WTC11 (cell line): ENCODE measurements at regions of chr7 and their contacts with region 1.

Region 1: GRCh38 chr7:129218514-129219062 is 6.2 kb upstream of the AHCYL2 start:
- DNase-seq: peak; percentile 91
- ATAC-seq: peak; percentile 80
- H3K4me3 Mint-ChIP-seq: no peak overlapping the region
- H3K27ac Mint-ChIP-seq: no peak overlapping the region
- H3K4me1 Mint-ChIP-seq: 0 out of 2 replicates have a peak, but pooled peaks cover 5% of the 10 kb centered on the region
- H3K27me3 Mint-ChIP-seq: no peaks in the 10 kb centered on the region; the same call in 1 of the 2 replicates
- CTCF ChIP-seq: peak; percentile 95

Region 2: DNA sequence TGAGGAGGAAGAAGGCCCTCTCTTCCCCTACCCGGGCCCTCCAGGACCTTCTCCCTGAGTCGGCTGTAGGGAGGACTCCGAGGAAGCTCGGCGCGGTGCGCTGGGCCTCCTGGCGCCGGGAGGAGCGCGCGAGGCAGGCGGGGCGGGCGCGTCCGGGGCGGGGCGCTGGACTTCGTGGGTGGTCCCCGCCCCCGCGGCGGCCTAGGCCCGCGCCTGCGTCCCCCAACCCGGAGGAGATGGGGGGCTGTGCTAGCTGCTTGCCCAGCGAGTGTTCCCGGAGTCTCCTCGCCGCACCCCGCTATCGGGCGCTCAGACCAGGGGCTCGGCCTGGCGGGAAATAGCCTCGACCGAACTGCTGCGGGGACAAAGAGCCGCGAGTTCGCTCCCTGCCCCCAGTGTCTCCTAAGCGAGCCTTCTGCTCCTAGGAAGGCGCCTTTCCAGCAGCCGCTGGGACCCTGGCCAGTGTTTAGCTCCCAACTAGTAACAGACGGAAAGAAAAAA is 49.4 kb before region 1 on chr7:
- CTCF ChIA-PET with region 1: interaction called, 45 read pairs
- POLR2A ChIA-PET with region 1: interaction called, 5 read pairs
- DNase-seq: peak; percentile 69
- ATAC-seq: peak; percentile 69
- H3K4me3 Mint-ChIP-seq: peak overlapping the region; percentile 77
- H3K27ac Mint-ChIP-seq: peak overlapping the region; percentile 89
- H3K4me1 Mint-ChIP-seq: peaks cover 39% of the 10 kb centered on the region
- H3K27me3 Mint-ChIP-seq: no peaks in the 10 kb centered on the region; the same call in none of the 2 replicates
- CTCF ChIP-seq: no peak

Region 3: GRCh38 chr7:129285111-129285510 is 66.5 kb after region 1 on chr7:
- CTCF ChIA-PET with region 1: interaction called, 13 read pairs
- POLR2A ChIA-PET with region 1: no interaction called
- DNase-seq: no peak
- ATAC-seq: no peak
- H3K4me3 Mint-ChIP-seq: no peak overlapping the region
- H3K27ac Mint-ChIP-seq: peak overlapping the region; percentile 78; the same call in 1 of the 2 replicates
- H3K4me1 Mint-ChIP-seq: peaks cover 26% of the 10 kb centered on the region
- H3K27me3 Mint-ChIP-seq: no peaks in the 10 kb centered on the region
- CTCF ChIP-seq: no peak

Region 4: GRCh38 chr7:129343099-129343700 is 124.6 kb after region 1 on chr7:
- CTCF ChIA-PET with region 1: interaction called, 11 read pairs
- POLR2A ChIA-PET with region 1: no interaction called
- DNase-seq: no peak
- ATAC-seq: no peak
- H3K4me3 Mint-ChIP-seq: no peak overlapping the region
- H3K27ac Mint-ChIP-seq: no peak overlapping the region
- H3K4me1 Mint-ChIP-seq: peaks cover 18% of the 10 kb centered on the region
- H3K27me3 Mint-ChIP-seq: no peaks in the 10 kb centered on the region
- CTCF ChIP-seq: peak; percentile 25; the same call in 1 of the 2 replicates

Region 5: DNA sequence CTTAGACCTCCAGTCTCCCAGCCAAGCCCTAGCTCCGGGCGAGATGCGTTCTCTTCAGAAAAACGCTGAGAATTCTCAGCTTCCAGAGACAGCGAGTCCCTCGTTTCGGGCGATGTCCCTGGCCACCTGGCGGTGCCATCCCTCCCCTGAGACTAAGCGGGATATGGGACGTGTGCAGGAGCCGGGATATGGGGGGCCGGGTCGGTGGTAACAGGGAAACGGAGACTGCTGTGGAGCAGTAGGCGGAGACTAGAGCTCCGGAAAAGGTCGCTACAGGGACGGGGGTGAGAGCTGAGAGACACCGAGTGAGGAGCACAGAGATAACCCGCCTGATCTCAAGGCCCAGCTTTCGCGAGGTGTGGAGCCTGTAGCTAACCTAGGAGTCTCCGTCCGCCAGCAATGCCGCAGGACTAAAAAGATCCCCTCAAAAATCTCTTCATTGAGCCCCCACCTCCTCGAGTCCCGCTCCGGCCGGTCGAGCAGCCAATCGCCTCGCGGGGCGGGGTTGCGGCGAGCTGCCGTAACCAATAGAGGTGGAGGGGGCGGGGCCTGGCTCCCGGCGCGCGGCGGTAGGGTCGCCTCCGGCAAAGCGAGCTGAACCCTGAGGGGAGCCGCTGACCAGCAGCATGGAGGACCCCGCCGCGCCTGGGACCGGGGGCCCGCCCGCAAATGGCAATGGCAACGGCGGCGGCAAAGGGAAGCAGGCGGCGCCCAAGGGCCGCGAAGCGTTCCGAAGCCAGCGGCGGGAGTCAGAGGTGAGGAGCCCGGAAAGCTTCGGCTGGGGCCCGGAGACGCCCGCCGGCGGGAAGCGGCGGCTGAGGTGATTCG is 215.5 kb after region 1 on chr7 and contains the start of gene STRIP2:
- CTCF ChIA-PET with region 1: interaction called, 10 read pairs
- POLR2A ChIA-PET with region 1: no interaction called
- DNase-seq: peak; percentile 99
- ATAC-seq: peak; percentile 88
- H3K4me3 Mint-ChIP-seq: peak within 1 kb of the TSS; percentile 86
- H3K27ac Mint-ChIP-seq: peak within 1 kb of the TSS; percentile 94
- H3K4me1 Mint-ChIP-seq: peaks cover 23% of the 10 kb centered on the region
- H3K27me3 Mint-ChIP-seq: peaks cover 31% of the 10 kb centered on the region
- CTCF ChIP-seq: no peak
- total RNA-seq, gene STRIP2: 6.5 to 7.7 TPM (median 7.6 TPM) in 3 replicates